Cardiac septum (tissue), 1 donor: ENCODE measurements at regions of chr12 and their contacts with region 1.

Region 1: GRCh38 chr12:57983146-57983857 is 41.9 kb downstream of the ATP23 start:
- DNase-seq: no peak

Region 2: GRCh38 chr12:58310828-58311622 is 327.7 kb after region 1 on chr12:
- intact Hi-C with region 1: loop called (anchors 10 kb)
- DNase-seq: no peak

Region 3: DNA sequence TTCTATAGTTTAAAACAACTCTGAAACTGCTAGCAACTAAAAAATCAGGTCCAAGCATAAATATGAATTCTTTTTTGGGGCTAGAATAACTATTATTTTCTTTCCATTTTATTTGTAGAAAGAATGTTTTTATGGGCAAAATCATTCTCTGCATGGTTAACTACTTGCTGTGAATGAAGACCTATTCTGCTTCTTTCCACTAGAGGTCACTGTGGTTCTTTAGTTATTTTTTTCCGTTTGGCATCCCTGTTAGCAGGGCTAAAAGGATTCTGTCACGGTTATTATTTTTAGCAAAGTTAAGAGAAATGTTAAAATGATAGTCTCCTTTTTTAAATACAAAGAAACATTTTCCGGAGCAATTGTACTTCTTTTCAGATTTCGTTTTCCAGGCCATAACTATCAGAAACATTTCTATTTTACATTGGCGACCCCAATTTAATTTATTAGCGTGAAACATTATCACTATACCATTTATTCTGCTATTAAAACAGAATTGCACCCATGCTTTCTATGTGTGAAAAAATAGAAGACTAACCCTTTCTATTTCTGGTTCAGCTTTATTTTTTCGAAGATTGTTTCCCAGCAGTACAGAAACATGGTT is 362.8 kb after region 1 on chr12:
- intact Hi-C with region 1: loop called (anchors 10 kb)
- DNase-seq: no peak

Region 4: DNA sequence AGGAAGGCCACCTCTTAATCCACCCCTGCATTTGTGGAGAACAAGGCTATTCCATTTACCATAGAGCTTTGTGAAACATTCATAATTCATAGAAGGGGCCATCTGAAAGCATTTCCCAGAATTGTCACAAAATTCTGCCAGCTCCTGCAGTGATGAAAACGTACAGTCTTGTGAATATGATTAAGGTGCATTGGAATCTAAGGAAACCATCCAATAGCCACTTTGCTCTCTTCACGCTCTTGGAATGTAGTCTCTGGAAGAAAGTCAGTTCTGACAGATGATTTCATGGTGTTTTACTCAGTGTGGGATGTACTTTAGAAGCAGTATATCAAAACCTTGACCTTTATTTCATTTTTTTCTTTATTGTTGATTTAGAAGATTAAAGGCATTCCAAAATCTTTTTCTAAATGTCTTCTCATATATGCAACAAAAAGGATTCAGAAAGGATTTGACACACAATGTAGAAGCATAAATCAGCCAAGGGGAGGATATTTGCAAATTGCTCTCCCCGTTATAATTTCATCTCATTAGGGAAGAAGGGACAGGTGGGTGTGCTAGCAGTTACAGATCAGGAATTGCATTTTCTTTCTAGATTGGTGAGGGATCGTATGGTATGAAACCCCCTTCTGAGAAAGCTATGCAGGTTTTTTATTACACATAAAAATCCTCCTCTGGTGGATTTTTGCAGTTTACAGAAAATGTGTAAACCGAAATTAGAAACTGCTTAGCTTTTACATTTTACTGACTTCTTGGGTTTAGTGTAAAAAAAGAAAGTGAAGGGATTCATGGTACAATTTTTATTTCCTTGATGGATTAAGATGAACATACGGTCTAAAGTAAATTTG is 546.8 kb after region 1 on chr12:
- intact Hi-C with region 1: loop called (anchors 10 kb)
- DNase-seq: no peak